ENCODE measurements at regions of chr9 and their contacts with region 1.

Region 1: GRCh38 chr9:1009101-1009707 is 32.7 kb downstream of the DMRT3 start:
- DNase-seq: peak; percentile 53 to 72 (median 68)
- ATAC-seq: peak; percentile 99
- H3K4me3 ChIP-seq: no peak overlapping the region
- H3K27ac ChIP-seq: no peak overlapping the region
- H3K4me1 ChIP-seq: no peaks in the 10 kb centered on the region
- H3K27me3 ChIP-seq: no peaks in the 10 kb centered on the region
- CTCF ChIP-seq: peak; percentile 73 to 83 (median 81)
- EP300 ChIP-seq: no peak
- POLR2A ChIP-seq: no peak
- RAD21 ChIP-seq: peak; percentile 68 to 77

Region 2: GRCh38 chr9:882478-882877 is 126.7 kb before region 1 on chr9:
- CTCF ChIA-PET with region 1: no interaction called
- POLR2A ChIA-PET with region 1: no interaction called
- in situ Hi-C with region 1: loop called (anchors 5 kb)
- intact Hi-C with region 1: no loop called
- DNase-seq: no peak
- ATAC-seq: no peak
- H3K4me3 ChIP-seq: no peak overlapping the region
- H3K27ac ChIP-seq: no peak overlapping the region
- H3K4me1 ChIP-seq: no peaks in the 10 kb centered on the region
- H3K27me3 ChIP-seq: peaks cover 0 to 8% of the 10 kb centered on the region in 2 experiments; a peak in 1 of 5 replicates
- CTCF ChIP-seq: no peak
- EP300 ChIP-seq: no peak
- POLR2A ChIP-seq: no peak
- RAD21 ChIP-seq: no peak

Region 3: DNA sequence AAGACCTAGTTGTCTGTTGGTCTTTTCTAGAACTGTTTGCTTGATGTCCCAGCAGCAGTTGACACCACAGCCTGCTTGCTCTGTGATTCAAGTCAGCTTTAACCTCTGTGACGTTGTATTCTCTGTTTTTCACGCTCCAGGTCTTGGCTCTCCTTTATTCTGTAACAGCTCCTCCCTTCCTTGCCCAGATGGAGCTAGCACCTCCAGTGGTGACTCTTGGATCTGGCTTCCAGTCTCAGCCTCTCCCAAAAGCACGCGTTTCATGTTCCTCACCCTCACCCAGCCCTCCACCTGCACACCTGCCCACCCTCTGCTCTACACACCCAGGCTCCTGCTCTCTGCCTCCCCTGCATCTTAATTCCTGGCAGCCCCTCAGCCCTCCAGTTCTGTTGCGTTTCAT is 117.1 kb before region 1 on chr9:
- CTCF ChIA-PET with region 1: interaction called, 3 read pairs
- POLR2A ChIA-PET with region 1: no interaction called
- in situ Hi-C with region 1: no loop called
- intact Hi-C with region 1: loop called (anchors 1 kb)
- DNase-seq: no peak
- ATAC-seq: peak; percentile 70
- H3K4me3 ChIP-seq: no peak overlapping the region
- H3K27ac ChIP-seq: no peak overlapping the region
- H3K4me1 ChIP-seq: no peaks in the 10 kb centered on the region
- H3K27me3 ChIP-seq: no peaks in the 10 kb centered on the region; a peak in 1 of 5 replicates
- CTCF ChIP-seq: 0 out of 6 replicates have a peak, but pooled peaks of 2 of the 3 experiments have one; percentile 27
- EP300 ChIP-seq: no peak
- POLR2A ChIP-seq: no peak
- RAD21 ChIP-seq: no peak

Region 4: GRCh38 chr9:928362-929042 is 80.7 kb before region 1 on chr9:
- CTCF ChIA-PET with region 1: no interaction called
- POLR2A ChIA-PET with region 1: no interaction called
- in situ Hi-C with region 1: no loop called
- intact Hi-C with region 1: no loop called
- DNase-seq: peak; percentile 14 to 18 (median 17)
- ATAC-seq: peak; percentile 79
- H3K4me3 ChIP-seq: no peak overlapping the region
- H3K27ac ChIP-seq: no peak overlapping the region
- H3K4me1 ChIP-seq: no peaks in the 10 kb centered on the region
- H3K27me3 ChIP-seq: no peaks in the 10 kb centered on the region
- CTCF ChIP-seq: peak; percentile 16 to 47 (median 27); a peak in 5 of 6 replicates
- EP300 ChIP-seq: no peak
- POLR2A ChIP-seq: no peak
- RAD21 ChIP-seq: no peak

Region 5: DNA sequence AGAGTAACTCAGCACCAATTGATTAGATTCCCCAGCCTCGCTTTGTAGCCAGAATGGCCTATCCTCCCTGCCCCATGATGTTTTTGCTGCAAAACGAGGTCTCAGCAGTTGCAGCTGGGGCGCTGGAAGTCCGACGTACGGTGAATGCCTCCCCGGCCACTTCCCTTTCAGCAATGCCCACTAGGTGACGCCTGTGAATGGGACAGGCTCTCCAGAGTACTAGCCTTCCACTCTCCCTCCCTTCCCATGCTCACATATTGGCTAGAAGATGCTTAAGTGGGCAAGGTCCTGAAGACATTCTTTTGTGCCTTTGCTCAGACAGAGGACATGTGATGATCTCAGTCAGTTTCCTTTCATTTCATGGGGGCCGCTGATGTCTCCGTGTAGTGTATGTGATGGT is 91.7 kb after region 1 on chr9:
- CTCF ChIA-PET with region 1: no interaction called
- POLR2A ChIA-PET with region 1: no interaction called
- in situ Hi-C with region 1: no loop called
- intact Hi-C with region 1: no loop called
- DNase-seq: peak in 1 of 4 experiments; percentile 0
- ATAC-seq: no peak
- H3K4me3 ChIP-seq: no peak overlapping the region
- H3K27ac ChIP-seq: no peak overlapping the region
- H3K4me1 ChIP-seq: no peaks in the 10 kb centered on the region
- H3K27me3 ChIP-seq: no peaks in the 10 kb centered on the region
- CTCF ChIP-seq: no peak
- EP300 ChIP-seq: no peak
- POLR2A ChIP-seq: no peak
- RAD21 ChIP-seq: no peak

Region 6: GRCh38 chr9:1154739-1155138 is 145.5 kb after region 1 on chr9:
- CTCF ChIA-PET with region 1: no interaction called
- POLR2A ChIA-PET with region 1: no interaction called
- in situ Hi-C with region 1: no loop called
- intact Hi-C with region 1: no loop called
- DNase-seq: no peak
- ATAC-seq: no peak
- H3K4me3 ChIP-seq: no peak overlapping the region
- H3K27ac ChIP-seq: no peak overlapping the region
- H3K4me1 ChIP-seq: no peaks in the 10 kb centered on the region
- H3K27me3 ChIP-seq: no peaks in the 10 kb centered on the region
- CTCF ChIP-seq: no peak
- EP300 ChIP-seq: no peak
- POLR2A ChIP-seq: no peak
- RAD21 ChIP-seq: no peak